ENCODE measurements at regions of chr13 and their contacts with region 1.

Region 1: GRCh38 chr13:41137951-41138350 is 5.3 kb upstream of the KBTBD6 start:
- DNase-seq: no peak
- ATAC-seq: no peak; the same call in 1 of the 2 replicates
- H3K4me3 ChIP-seq: no peak overlapping the region
- H3K27ac ChIP-seq: no peak overlapping the region; the same call in 1 of the 2 replicates
- H3K4me1 ChIP-seq: peaks cover 7% of the 10 kb centered on the region; the same call in 1 of the 2 replicates
- H3K27me3 ChIP-seq: no peaks in the 10 kb centered on the region
- CTCF ChIP-seq: no peak

Region 2: GRCh38 chr13:40517486-40518480 is 620.2 kb before region 1 on chr13:
- CTCF ChIA-PET with region 1: no interaction called
- POLR2A ChIA-PET with region 1: no interaction called
- in situ Hi-C with region 1: no loop called
- intact Hi-C with region 1: no loop called
- DNase-seq: no peak
- ATAC-seq: no peak
- H3K4me3 ChIP-seq: no peak overlapping the region
- H3K27ac ChIP-seq: no peak overlapping the region
- H3K4me1 ChIP-seq: no peaks in the 10 kb centered on the region
- H3K27me3 ChIP-seq: no peaks in the 10 kb centered on the region
- CTCF ChIP-seq: no peak

Region 3: DNA sequence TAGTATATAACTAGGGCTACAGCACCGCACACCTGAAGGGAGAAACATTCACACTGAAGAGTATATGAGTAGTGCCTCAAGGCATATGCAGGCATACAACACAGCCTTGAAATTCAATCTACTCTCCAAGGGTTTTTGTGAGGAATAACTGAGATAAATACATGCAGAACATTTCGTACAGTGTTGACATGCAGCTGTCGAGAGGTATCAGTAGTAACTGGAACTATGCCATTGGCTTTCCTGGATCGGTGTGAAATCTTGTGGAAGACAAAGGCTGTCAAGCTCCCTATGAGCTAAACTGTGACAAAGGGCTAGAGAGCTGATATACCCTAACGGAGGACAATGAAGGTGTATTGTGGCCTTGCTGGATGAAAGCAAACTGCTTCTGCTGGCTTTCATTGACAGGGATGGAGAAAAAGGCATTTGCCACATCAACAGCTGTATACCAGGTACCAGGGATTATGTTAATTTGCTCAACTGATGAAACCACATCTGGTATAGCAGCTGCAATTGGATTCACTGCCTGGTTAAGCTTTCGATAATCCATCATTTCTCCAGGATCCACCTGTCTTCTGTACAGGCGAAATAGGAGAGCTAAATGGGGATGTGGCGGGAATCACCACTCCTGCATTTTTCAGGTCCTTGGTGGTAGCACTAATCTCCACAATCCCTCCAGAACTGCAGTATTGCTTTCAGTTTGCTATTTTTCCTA is 109.2 kb after region 1 on chr13:
- CTCF ChIA-PET with region 1: no interaction called
- POLR2A ChIA-PET with region 1: interaction called, 16 read pairs
- in situ Hi-C with region 1: no loop called
- intact Hi-C with region 1: no loop called
- DNase-seq: no peak
- ATAC-seq: no peak
- H3K4me3 ChIP-seq: no peak overlapping the region
- H3K27ac ChIP-seq: no peak overlapping the region
- H3K4me1 ChIP-seq: no peaks in the 10 kb centered on the region
- H3K27me3 ChIP-seq: no peaks in the 10 kb centered on the region
- CTCF ChIP-seq: no peak

Measured in Panc1 (cell line).